CD8-positive, alpha-beta T cell (primary cell): ENCODE measurements at regions of chr7 and their contacts with region 1.

Region 1: GRCh38 chr7:151315038-151315655 is 26.5 kb upstream of the NUB1 start:
- DNase-seq: peak; percentile 63 to 89 (median 82)
- ATAC-seq: peak; percentile 95
- H3K4me3 ChIP-seq: no peak overlapping the region
- H3K4me3 Mint-ChIP-seq: no peak overlapping the region
- H3K27ac ChIP-seq: no peak overlapping the region
- H3K27ac Mint-ChIP-seq: no peak overlapping the region
- H3K4me1 ChIP-seq: peaks cover 4% of the 10 kb centered on the region
- H3K4me1 Mint-ChIP-seq: peaks cover 6% of the 10 kb centered on the region
- H3K27me3 ChIP-seq: peaks cover 0 to 4% of the 10 kb centered on the region in 2 experiments
- H3K27me3 Mint-ChIP-seq: no peaks in the 10 kb centered on the region
- CTCF ChIP-seq: peak; percentile 88

Region 2: DNA sequence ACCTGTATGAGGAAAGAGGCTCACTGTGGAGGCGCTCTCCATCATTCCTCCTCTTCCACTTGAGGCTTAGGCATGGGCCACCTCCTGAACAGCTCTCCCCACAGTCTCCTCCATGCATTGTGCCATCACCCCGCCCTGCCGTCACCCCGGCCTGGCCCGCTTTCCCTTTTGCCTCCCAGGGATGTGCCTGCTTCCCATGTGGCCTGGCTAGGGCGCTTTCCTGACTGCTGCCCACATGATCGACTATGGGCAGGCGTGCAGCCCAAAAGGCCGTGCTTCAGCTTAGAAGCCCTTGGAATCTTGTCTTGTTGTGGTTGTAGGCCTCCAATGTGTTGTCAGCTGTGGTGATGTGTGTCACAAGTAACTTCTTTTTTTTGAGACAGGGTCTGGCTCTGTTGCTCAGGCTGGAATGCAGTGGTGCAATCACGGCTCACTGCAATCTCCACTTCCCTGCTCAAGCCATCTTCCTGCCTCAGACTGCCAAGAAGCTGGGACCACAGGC is 990.0 kb before region 1 on chr7:
- CTCF ChIA-PET with region 1: no interaction called
- POLR2A ChIA-PET with region 1: no interaction called
- intact Hi-C with region 1: no loop called
- DNase-seq: no peak
- ATAC-seq: no peak
- H3K4me3 ChIP-seq: no peak overlapping the region
- H3K4me3 Mint-ChIP-seq: peak overlapping the region; percentile 93
- H3K27ac ChIP-seq: peak overlapping the region in 1 of 2 experiments; percentile 16
- H3K27ac Mint-ChIP-seq: peak overlapping the region; percentile 96
- H3K4me1 ChIP-seq: peaks cover 20% of the 10 kb centered on the region
- H3K4me1 Mint-ChIP-seq: peaks cover 41% of the 10 kb centered on the region
- H3K27me3 ChIP-seq: no peaks in the 10 kb centered on the region
- H3K27me3 Mint-ChIP-seq: no peaks in the 10 kb centered on the region
- CTCF ChIP-seq: no peak

Region 3: DNA sequence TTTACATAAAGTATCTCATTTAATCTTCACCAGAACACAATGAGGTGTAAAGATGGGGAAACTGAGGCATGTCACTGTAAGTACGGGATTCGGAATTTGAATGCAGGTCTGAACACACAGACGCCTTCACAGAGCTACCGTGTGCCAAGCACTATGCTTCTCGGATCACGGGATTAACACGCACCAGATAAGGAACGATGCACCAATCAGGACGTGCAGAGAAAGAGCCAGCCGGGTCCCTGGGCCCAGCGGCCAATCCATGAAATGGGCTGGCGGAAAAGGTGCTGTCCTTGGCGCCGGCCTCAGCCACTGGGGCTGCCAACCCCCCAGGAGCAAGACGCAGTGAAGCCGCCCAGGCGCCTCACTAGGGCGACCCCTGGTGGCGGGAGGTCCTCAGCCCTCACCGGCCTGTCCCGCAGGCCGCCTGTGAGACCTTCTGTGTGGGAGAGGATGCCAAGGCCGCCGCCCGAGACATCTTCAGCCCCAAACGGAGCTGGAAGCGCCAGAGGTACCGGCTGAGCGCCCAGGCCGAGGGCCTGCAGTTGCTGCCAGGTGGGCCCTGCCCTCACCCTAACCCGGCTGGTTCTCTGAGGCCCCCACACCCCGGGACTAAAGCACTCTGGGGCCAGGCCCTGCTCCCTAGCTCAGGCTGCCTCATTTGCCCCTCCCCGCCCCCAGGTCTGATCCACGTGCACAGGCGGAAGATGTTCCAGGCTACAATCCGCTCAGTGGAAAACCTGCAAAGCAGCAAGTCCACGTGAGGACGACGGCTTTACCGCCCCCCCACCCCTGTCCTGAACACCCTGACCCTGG is 306.4 kb before region 1 on chr7:
- CTCF ChIA-PET with region 1: no interaction called
- POLR2A ChIA-PET with region 1: no interaction called
- intact Hi-C with region 1: no loop called
- DNase-seq: peak; percentile 56 to 89 (median 78)
- ATAC-seq: peak; percentile 47
- H3K4me3 ChIP-seq: peak overlapping the region; percentile 31 to 46
- H3K4me3 Mint-ChIP-seq: peak overlapping the region; percentile 82
- H3K27ac ChIP-seq: peak overlapping the region; percentile 40 to 68
- H3K27ac Mint-ChIP-seq: peak overlapping the region; percentile 90
- H3K4me1 ChIP-seq: peaks cover 68% of the 10 kb centered on the region
- H3K4me1 Mint-ChIP-seq: peaks cover 61% of the 10 kb centered on the region
- H3K27me3 ChIP-seq: no peaks in the 10 kb centered on the region
- H3K27me3 Mint-ChIP-seq: no peaks in the 10 kb centered on the region
- CTCF ChIP-seq: peak; percentile 68

Region 4: DNA sequence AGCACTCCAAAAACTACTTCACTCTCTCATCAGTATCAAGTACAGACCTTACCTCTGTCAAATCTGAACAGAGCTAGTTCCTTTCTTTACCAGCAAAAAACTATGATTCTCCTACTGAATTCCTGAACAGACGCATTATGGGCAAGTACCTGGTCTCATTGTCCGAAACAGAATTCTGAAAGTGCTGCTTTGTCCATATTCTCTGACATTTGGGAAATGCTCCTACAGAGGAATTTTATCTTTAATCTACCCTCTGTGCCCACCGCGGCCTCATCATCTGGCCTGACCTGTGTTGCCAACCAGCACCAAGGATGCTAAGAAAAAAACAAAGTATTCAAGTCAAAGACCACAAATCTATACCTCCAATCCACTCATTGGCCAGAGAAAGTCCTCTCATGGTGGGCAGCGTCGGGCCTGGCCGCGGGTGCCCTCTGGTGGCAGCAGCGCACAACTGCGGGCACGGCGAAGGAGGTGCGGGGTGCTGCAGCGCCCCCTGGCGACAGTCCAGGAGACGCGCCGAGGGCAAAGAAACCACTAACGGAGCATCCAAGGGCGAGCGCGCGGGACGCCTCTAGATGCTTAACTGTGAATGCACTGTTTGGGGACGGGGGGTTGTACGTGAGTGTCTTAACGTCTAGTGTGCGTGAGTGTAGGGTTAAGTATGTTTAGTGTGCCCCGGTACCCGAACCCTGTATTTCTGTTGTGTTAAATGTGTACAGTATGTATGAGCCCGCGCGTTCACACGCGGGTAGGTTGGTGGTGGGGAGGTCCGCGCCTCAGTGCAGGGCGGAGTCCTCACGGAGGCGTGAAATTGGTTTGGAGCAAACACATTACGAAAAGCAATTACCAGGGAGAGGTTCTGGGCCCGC is 142.6 kb before region 1 on chr7:
- CTCF ChIA-PET with region 1: no interaction called
- POLR2A ChIA-PET with region 1: no interaction called
- intact Hi-C with region 1: no loop called
- DNase-seq: peak; percentile 52 to 88 (median 78)
- ATAC-seq: peak; percentile 87
- H3K4me3 ChIP-seq: no peak overlapping the region
- H3K4me3 Mint-ChIP-seq: no peak overlapping the region
- H3K27ac ChIP-seq: no peak overlapping the region
- H3K27ac Mint-ChIP-seq: no peak overlapping the region
- H3K4me1 ChIP-seq: peaks cover 5% of the 10 kb centered on the region
- H3K4me1 Mint-ChIP-seq: peaks cover 10% of the 10 kb centered on the region
- H3K27me3 ChIP-seq: peaks cover 0 to 12% of the 10 kb centered on the region in 2 experiments
- H3K27me3 Mint-ChIP-seq: peaks cover 62% of the 10 kb centered on the region
- CTCF ChIP-seq: peak; percentile 100

Region 5: DNA sequence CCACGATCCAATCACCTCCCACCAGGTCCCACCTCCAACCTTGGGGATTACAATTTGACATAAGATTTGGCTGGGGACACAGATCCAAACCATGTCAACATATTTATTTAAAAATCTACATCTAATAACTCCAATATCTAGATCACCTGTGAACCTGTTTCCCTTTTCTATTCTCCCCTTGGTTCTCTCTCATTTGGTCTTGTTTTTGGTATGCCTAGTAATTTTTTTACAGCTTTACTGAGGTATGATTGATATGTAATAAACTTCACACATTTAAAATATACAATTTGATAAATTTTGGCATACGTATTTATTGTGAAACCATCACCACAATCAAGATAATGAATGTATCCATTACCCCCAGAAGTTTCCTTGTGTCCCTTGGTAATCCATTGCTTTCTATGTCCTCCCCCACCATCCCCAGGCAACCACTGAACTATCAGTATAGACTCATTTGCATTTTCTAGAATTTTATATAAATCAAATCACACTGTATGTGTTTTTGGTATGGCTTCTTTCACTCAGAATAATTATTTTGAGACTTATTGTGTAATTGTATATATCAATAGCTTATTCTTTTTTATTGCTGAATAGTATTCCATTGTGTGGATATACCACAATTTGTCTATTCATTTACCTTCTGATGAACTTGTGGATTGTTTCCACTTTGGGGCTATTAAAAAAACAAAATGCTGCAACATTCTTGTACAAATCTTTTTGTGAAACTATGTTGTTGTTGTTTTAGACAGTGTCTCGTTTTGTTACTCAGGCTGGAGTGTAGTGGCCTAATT is 18.8 kb before region 1 on chr7:
- CTCF ChIA-PET with region 1: interaction called, 10 read pairs
- POLR2A ChIA-PET with region 1: no interaction called
- intact Hi-C with region 1: no loop called
- DNase-seq: no peak
- ATAC-seq: no peak
- H3K4me3 ChIP-seq: no peak overlapping the region
- H3K4me3 Mint-ChIP-seq: no peak overlapping the region
- H3K27ac ChIP-seq: no peak overlapping the region
- H3K27ac Mint-ChIP-seq: no peak overlapping the region
- H3K4me1 ChIP-seq: no peaks in the 10 kb centered on the region
- H3K4me1 Mint-ChIP-seq: no peaks in the 10 kb centered on the region
- H3K27me3 ChIP-seq: no peaks in the 10 kb centered on the region
- H3K27me3 Mint-ChIP-seq: peaks cover 13% of the 10 kb centered on the region
- CTCF ChIP-seq: no peak

Region 6: GRCh38 chr7:151304856-151305255 is 10.3 kb before region 1 on chr7:
- CTCF ChIA-PET with region 1: interaction called, 23 read pairs
- POLR2A ChIA-PET with region 1: interaction called, 3 read pairs
- intact Hi-C with region 1: no loop called
- DNase-seq: no peak
- ATAC-seq: no peak
- H3K4me3 ChIP-seq: no peak overlapping the region
- H3K4me3 Mint-ChIP-seq: no peak overlapping the region
- H3K27ac ChIP-seq: no peak overlapping the region
- H3K27ac Mint-ChIP-seq: no peak overlapping the region
- H3K4me1 ChIP-seq: peaks cover 8% of the 10 kb centered on the region
- H3K4me1 Mint-ChIP-seq: peaks cover 6% of the 10 kb centered on the region
- H3K27me3 ChIP-seq: peaks cover 0 to 14% of the 10 kb centered on the region in 2 experiments
- H3K27me3 Mint-ChIP-seq: peaks cover 38% of the 10 kb centered on the region
- CTCF ChIP-seq: no peak

Region 7: DNA sequence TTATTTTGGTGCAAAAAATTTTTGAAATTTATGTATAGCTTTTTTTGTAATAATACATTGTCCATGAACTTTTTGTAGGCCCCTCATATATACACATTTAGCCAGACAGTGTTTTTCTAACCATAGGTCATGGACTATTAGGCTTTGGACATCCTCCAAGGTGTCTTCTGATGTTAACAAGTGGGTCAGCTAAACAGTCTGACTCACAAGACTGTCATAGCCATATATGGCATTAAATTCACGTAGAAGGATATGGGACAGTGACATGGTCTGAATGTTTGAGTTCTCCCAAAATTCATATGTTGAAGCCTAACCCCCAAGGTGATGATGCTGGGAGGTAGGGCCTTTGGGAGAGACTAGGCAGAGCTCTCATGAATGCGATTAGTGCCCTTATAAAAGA is 12.5 kb after region 1 on chr7:
- CTCF ChIA-PET with region 1: interaction called, 18 read pairs
- POLR2A ChIA-PET with region 1: no interaction called
- intact Hi-C with region 1: no loop called
- DNase-seq: no peak
- ATAC-seq: no peak
- H3K4me3 ChIP-seq: no peak overlapping the region
- H3K4me3 Mint-ChIP-seq: no peak overlapping the region
- H3K27ac ChIP-seq: no peak overlapping the region
- H3K27ac Mint-ChIP-seq: no peak overlapping the region
- H3K4me1 ChIP-seq: no peaks in the 10 kb centered on the region
- H3K4me1 Mint-ChIP-seq: no peaks in the 10 kb centered on the region
- H3K27me3 ChIP-seq: no peaks in the 10 kb centered on the region
- H3K27me3 Mint-ChIP-seq: peaks cover 3% of the 10 kb centered on the region
- CTCF ChIP-seq: no peak

Region 8: GRCh38 chr7:151334628-151335027 is 19.5 kb after region 1 on chr7:
- CTCF ChIA-PET with region 1: interaction called, 17 read pairs
- POLR2A ChIA-PET with region 1: interaction called, 3 read pairs
- intact Hi-C with region 1: no loop called
- DNase-seq: no peak
- ATAC-seq: no peak
- H3K4me3 ChIP-seq: no peak overlapping the region
- H3K4me3 Mint-ChIP-seq: no peak overlapping the region
- H3K27ac ChIP-seq: no peak overlapping the region
- H3K27ac Mint-ChIP-seq: no peak overlapping the region
- H3K4me1 ChIP-seq: no peaks in the 10 kb centered on the region
- H3K4me1 Mint-ChIP-seq: peaks cover under 1% of the 10 kb centered on the region
- H3K27me3 ChIP-seq: no peaks in the 10 kb centered on the region
- H3K27me3 Mint-ChIP-seq: no peaks in the 10 kb centered on the region
- CTCF ChIP-seq: no peak

Region 9: DNA sequence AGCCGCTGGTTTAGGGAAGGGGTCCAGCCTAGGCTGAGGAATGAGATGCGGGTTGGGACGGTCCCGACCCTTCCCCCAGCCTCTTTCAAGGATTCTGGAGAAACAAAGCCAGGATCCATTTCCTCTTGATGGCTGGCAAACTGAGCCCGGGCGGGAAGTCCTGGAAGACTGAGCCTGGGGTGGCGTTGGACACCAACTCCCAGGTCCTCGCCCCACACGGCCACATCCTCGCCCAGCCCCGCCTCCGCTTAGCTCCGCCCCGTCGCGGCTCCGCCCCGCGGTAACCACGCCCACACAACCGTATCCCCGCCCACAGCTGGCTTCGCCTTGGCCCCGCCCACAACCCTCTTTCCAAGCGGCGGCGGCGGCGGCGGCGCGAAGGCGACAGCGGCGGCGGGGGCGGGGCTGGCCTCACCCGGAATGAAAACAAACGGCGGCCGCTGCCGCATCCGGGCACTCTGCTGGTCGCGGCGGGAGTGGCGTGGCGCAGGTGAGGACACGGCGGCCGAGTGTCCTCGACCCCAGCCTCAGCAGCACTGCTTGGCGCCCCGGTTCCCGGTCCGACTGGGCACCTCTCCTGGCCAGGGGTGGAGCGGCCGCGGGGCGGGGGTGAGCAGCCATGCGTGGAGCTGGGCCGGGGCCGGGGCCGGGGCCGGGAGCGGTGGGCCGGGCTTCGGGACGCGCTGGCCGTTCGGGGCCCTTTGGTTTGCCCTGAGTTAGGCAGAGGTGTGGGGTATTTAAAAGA is 26.4 kb after region 1 on chr7 and contains the start of gene NUB1:
- CTCF ChIA-PET with region 1: interaction called, 192 read pairs
- POLR2A ChIA-PET with region 1: interaction called, 3 read pairs
- intact Hi-C with region 1: no loop called
- DNase-seq: peak; percentile 83 to 98 (median 92)
- ATAC-seq: peak; percentile 91
- H3K4me3 ChIP-seq: peak within 1 kb of the TSS; percentile 68 to 82
- H3K4me3 Mint-ChIP-seq: peak within 1 kb of the TSS; percentile 88
- H3K27ac ChIP-seq: peak within 1 kb of the TSS; percentile 72 to 75
- H3K27ac Mint-ChIP-seq: peak within 1 kb of the TSS; percentile 92
- H3K4me1 ChIP-seq: peaks cover 23% of the 10 kb centered on the region
- H3K4me1 Mint-ChIP-seq: peaks cover 35% of the 10 kb centered on the region
- H3K27me3 ChIP-seq: no peaks in the 10 kb centered on the region
- H3K27me3 Mint-ChIP-seq: no peaks in the 10 kb centered on the region
- CTCF ChIP-seq: no peak
- total RNA-seq, gene NUB1: 78.4 to 81.2 TPM

Region 10: DNA sequence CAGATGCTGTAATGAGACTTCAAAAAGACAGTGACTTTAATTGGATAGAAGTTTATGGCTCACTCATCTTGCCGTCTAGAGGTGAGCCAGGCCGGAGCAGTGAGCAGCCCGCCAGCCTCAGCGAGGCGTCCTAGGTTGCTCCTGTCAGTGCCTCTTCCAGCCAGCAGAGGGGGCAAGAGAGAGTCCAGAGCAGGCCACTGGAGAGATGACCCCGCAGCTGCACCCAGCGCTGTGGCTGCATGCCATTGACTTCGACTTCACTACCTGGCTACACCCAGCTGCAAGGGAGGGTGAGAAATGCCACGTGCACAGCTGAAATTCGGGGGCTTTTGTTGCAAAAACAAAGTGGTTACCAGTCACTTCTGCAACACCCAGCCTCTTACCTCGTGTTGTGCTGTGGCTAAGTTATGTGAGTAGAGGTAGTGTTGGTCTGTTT is 53.0 kb after region 1 on chr7:
- CTCF ChIA-PET with region 1: interaction called, 45 read pairs
- POLR2A ChIA-PET with region 1: no interaction called
- intact Hi-C with region 1: no loop called
- DNase-seq: peak; percentile 56 to 86 (median 77)
- ATAC-seq: peak; percentile 97
- H3K4me3 ChIP-seq: no peak overlapping the region
- H3K4me3 Mint-ChIP-seq: no peak overlapping the region
- H3K27ac ChIP-seq: no peak overlapping the region
- H3K27ac Mint-ChIP-seq: peak overlapping the region; percentile 64
- H3K4me1 ChIP-seq: peaks cover 9% of the 10 kb centered on the region
- H3K4me1 Mint-ChIP-seq: peaks cover 18% of the 10 kb centered on the region
- H3K27me3 ChIP-seq: no peaks in the 10 kb centered on the region
- H3K27me3 Mint-ChIP-seq: no peaks in the 10 kb centered on the region
- CTCF ChIP-seq: peak; percentile 96

Region 11: GRCh38 chr7:152485814-152486213 is 1170.7 kb after region 1 on chr7:
- CTCF ChIA-PET with region 1: no interaction called
- POLR2A ChIA-PET with region 1: no interaction called
- intact Hi-C with region 1: no loop called
- DNase-seq: no peak
- ATAC-seq: no peak
- H3K4me3 ChIP-seq: no peak overlapping the region
- H3K4me3 Mint-ChIP-seq: no peak overlapping the region
- H3K27ac ChIP-seq: no peak overlapping the region
- H3K27ac Mint-ChIP-seq: no peak overlapping the region
- H3K4me1 ChIP-seq: no peaks in the 10 kb centered on the region
- H3K4me1 Mint-ChIP-seq: no peaks in the 10 kb centered on the region
- H3K27me3 ChIP-seq: no peaks in the 10 kb centered on the region
- H3K27me3 Mint-ChIP-seq: no peaks in the 10 kb centered on the region
- CTCF ChIP-seq: no peak